SK-N-SH (cell line): ENCODE measurements at regions of chr11 and their contacts with region 1.

Region 1: DNA sequence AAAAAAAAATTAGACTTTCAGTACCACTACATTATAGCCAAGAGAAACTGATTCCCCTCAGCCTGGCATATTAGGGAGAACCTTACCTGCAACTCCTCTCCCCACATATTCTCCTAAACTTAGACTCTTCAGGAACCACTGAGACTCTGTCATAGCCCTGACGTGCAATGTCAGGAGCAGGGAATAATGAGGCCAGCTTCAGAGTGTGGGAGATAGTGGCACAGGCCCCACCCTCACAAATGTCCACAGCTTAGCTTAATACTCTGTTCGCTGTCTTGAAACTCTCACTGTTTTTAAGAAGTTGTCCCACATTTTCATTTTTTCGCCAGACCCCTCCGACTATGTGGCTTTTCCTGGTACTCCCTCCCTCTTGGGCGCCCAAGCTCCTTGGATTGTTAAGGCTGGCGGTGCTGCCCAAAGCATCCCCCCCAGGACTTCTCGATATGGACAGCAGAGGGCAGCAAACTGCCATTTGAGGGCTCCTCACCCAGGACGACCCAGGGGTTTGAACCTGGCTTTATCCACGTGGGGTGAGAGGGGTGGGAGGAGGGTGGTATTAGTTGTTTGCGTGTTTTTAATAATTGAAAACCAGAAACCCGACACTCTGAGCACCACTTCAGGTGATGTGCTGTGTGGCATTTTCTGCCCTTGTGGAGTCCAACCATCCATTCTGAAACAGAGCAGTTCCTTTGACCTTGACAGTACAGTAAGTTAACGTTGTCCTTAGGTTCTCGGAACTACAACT is 45.2 kb upstream of the RASSF10 start:
- DNase-seq: peak; percentile 88
- H3K4me3 ChIP-seq: no peak overlapping the region
- H3K27ac ChIP-seq: no peak overlapping the region
- H3K4me1 ChIP-seq: no peaks in the 10 kb centered on the region; a peak in 1 of 4 replicates
- H3K27me3 ChIP-seq: no peaks in the 10 kb centered on the region
- CTCF ChIP-seq: peak; percentile 93
- EP300 ChIP-seq: no peak
- RAD21 ChIP-seq: peak; percentile 91

Region 2: DNA sequence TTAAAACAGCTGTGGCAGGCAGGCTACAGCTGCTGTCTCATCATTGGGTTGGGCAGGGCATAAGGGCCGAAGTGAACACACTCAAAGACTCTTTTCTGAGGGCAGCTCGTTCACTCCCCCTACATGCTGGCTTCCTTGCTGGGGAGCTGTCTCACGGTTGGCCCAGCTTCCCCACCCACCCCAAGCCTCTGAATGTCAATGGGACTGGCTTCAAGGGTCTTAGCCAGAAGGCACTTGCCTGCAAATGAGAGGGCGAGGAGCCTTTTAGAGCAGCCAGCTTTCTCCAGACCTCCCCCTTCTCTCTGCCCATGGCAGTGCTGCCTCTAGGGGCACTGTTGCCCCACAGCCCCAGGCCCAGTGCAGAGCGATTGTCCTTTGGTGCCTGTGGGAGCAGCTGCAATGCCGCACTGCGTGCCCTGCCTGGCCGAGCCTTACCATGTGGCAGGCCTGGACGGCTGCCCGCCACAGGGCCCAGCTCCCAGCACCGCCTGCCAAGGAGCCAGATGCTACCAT is 49.5 kb before region 1 on chr11:
- CTCF ChIA-PET with region 1: interaction called, 18 read pairs
- POLR2A ChIA-PET with region 1: no interaction called
- DNase-seq: peak; percentile 82
- H3K4me3 ChIP-seq: peak overlapping the region in 1 of 2 experiments; percentile 41; a peak in 1 of 4 replicates
- H3K27ac ChIP-seq: peak overlapping the region in 1 of 2 experiments; percentile 68; a peak in 2 of 4 replicates
- H3K4me1 ChIP-seq: peaks cover 0 to 14% of the 10 kb centered on the region in 2 experiments; a peak in 1 of 4 replicates
- H3K27me3 ChIP-seq: no peaks in the 10 kb centered on the region
- CTCF ChIP-seq: peak; percentile 64
- EP300 ChIP-seq: no peak
- RAD21 ChIP-seq: peak; percentile 49

Region 3: DNA sequence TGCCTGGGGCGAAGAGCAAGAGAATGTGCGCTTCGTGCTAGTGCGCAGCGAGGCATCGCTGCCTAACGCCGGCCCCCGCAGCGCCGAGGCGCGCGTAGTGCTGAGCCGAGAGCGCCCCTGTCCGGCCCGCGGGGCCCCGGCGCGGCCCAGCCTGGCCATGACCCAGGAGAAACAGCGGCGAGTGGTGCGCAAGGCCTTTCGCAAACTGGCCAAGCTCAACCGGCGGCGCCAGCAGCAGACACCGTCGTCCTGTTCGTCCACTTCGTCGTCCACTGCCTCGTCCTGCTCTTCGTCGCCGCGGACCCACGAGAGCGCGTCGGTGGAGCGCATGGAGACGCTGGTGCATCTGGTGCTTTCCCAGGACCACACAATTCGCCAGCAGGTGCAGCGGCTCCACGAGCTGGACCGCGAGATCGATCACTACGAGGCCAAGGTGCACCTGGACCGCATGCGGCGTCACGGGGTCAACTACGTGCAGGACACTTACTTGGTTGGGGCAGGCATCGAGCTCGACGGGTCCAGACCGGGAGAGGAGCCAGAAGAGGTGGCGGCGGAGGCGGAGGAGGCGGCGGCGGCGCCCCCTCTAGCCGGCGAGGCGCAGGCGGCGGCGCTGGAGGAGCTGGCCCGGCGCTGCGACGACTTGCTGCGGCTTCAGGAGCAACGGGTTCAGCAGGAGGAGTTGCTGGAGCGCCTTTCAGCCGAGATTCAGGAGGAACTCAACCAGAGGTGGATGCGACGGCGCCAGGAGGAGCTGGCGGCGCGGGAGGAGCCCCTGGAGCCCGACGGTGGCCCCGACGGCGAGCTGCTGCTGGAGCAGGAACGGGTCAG is 46.2 kb after region 1 on chr11:
- CTCF ChIA-PET with region 1: interaction called, 11 read pairs
- POLR2A ChIA-PET with region 1: no interaction called
- DNase-seq: peak; percentile 68
- H3K4me3 ChIP-seq: peak overlapping the region in 1 of 2 experiments; percentile 33; a peak in 2 of 4 replicates
- H3K27ac ChIP-seq: no peak overlapping the region
- H3K4me1 ChIP-seq: peaks cover 0 to 8% of the 10 kb centered on the region in 2 experiments; a peak in 1 of 4 replicates
- H3K27me3 ChIP-seq: peaks cover 33% of the 10 kb centered on the region
- CTCF ChIP-seq: no peak
- EP300 ChIP-seq: no peak
- RAD21 ChIP-seq: no peak

Region 4: DNA sequence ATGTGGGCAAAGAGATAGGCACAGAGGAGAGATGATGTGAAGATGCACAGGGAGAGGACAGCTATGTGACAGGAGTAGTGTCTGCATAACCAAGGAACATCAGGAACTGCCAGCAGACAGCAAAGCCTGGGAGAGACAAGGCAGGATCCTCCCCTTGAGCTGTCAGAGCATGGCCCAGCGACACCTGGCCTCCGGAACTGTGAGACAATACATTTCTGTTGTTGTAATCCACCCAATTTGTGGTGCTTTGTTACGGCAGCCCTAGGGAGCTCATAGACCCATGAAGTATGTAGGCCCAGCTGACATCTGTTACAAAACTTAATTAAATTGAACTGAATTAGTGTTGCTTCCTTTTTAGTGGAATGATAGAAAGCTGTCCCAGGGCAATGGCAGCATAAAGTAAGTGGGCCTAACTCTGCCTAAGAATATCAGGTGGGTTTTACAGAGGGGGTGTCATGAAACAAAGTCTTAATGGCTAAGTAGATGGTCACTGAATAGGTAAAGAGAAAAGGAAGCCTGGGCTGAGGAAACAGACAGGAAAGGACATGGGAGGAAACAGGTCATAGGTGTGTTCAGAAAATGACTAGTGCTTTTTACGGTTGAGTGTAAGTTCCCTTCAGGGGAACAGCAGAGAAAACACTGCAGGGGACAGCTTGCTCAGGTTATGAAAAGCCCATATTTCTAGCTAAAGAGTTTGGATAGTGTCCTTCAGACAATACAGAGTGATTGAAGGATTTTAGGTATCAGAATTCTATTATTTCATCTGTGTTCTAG is 70.0 kb after region 1 on chr11:
- CTCF ChIA-PET with region 1: no interaction called
- POLR2A ChIA-PET with region 1: no interaction called
- DNase-seq: peak; percentile 34
- H3K4me3 ChIP-seq: no peak overlapping the region
- H3K27ac ChIP-seq: peak overlapping the region in 1 of 2 experiments; percentile 43; a peak in 1 of 4 replicates
- H3K4me1 ChIP-seq: peaks cover 0 to 8% of the 10 kb centered on the region in 2 experiments; a peak in 2 of 4 replicates
- H3K27me3 ChIP-seq: peaks cover 11% of the 10 kb centered on the region; the same call in 1 of the 2 replicates
- CTCF ChIP-seq: no peak
- EP300 ChIP-seq: peak in 1 of 2 experiments; percentile 45; a peak in 1 of 4 replicates
- RAD21 ChIP-seq: no peak

Region 5: GRCh38 chr11:13073119-13073981 is 109.4 kb after region 1 on chr11:
- CTCF ChIA-PET with region 1: no interaction called
- POLR2A ChIA-PET with region 1: no interaction called
- DNase-seq: no peak
- H3K4me3 ChIP-seq: no peak overlapping the region
- H3K27ac ChIP-seq: no peak overlapping the region
- H3K4me1 ChIP-seq: no peaks in the 10 kb centered on the region
- H3K27me3 ChIP-seq: peaks cover 17% of the 10 kb centered on the region; the same call in 1 of the 2 replicates
- CTCF ChIP-seq: no peak
- EP300 ChIP-seq: no peak
- RAD21 ChIP-seq: no peak

Region 6: GRCh38 chr11:13169709-13170108 is 205.7 kb after region 1 on chr11:
- CTCF ChIA-PET with region 1: interaction called, 14 read pairs
- POLR2A ChIA-PET with region 1: no interaction called
- DNase-seq: no peak
- H3K4me3 ChIP-seq: no peak overlapping the region
- H3K27ac ChIP-seq: no peak overlapping the region
- H3K4me1 ChIP-seq: peaks cover 0 to 2% of the 10 kb centered on the region in 2 experiments; a peak in 1 of 4 replicates
- H3K27me3 ChIP-seq: no peaks in the 10 kb centered on the region
- CTCF ChIP-seq: no peak
- EP300 ChIP-seq: no peak
- RAD21 ChIP-seq: no peak

Region 7: DNA sequence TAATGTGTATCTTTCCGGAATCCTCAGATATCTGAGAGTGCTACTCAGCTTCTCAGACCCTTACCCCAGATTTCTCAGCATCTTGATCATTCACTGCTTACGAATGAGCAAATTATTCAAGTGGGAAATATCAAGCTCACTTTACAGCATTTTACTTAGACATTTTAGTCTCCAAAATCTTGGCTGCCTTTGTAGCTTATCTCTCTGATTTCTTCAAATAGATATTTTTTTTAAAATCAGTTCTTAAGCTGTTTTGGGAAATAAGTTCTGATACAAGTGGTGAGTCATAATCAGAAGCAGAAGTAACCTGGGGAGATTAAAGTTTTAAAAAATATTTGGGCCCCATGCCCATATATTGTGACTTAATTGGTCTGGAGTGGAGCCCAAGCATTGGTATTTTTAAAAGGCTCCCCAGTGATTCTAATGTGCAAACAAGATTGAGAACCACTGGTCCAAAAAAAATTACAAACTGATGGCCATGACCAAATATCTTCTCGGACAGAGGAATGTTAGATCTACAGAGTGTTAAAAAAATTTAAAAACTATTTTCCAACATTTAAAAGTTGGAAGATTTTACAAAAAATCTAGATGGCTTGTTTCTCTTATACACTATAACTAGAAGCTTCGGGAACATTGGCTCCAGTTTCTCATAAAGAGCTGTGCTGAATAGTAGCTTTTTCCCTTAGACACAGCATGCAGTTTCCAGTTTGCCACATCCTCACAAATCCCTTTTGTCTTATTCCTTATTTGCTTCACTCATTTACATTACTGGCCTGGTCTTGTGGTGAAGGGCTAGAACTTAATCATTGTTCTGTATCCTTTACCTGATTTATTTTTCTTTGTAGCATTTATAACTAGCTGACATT is 225.8 kb after region 1 on chr11:
- CTCF ChIA-PET with region 1: interaction called, 75 read pairs
- POLR2A ChIA-PET with region 1: no interaction called
- DNase-seq: no peak
- H3K4me3 ChIP-seq: no peak overlapping the region
- H3K27ac ChIP-seq: no peak overlapping the region; a peak in 1 of 4 replicates
- H3K4me1 ChIP-seq: no peaks in the 10 kb centered on the region
- H3K27me3 ChIP-seq: no peaks in the 10 kb centered on the region
- CTCF ChIP-seq: no peak
- EP300 ChIP-seq: no peak
- RAD21 ChIP-seq: no peak